ENCODE measurements at regions of chr22 and their contacts with region 1.

Region 1: GRCh38 chr22:50293441-50294318 is 13.8 kb downstream of the PLXNB2 start:
- DNase-seq: peak; percentile 96 to 98
- H3K4me3 ChIP-seq: peak overlapping the region; percentile 54
- H3K27ac ChIP-seq: peak overlapping the region; percentile 87
- H3K4me1 ChIP-seq: peaks cover 58% of the 10 kb centered on the region
- H3K27me3 ChIP-seq: no peaks in the 10 kb centered on the region
- CTCF ChIP-seq: peak; percentile 30; the same call in 1 of the 2 replicates

Region 2: GRCh38 chr22:50282361-50282760 is 11.3 kb before region 1 on chr22:
- CTCF ChIA-PET with region 1: no interaction called
- POLR2A ChIA-PET with region 1: interaction called, 9 read pairs
- intact Hi-C with region 1: loop called (anchors 1 kb)
- DNase-seq: peak; percentile 93 to 99
- H3K4me3 ChIP-seq: peak overlapping the region; percentile 45
- H3K27ac ChIP-seq: peak overlapping the region; percentile 73
- H3K4me1 ChIP-seq: peaks cover 38% of the 10 kb centered on the region
- H3K27me3 ChIP-seq: no peaks in the 10 kb centered on the region
- CTCF ChIP-seq: no peak

Region 3: GRCh38 chr22:50306753-50307749 is 13.4 kb after region 1 on chr22 and contains the start of gene PLXNB2:
- CTCF ChIA-PET with region 1: interaction called, 6 read pairs
- POLR2A ChIA-PET with region 1: interaction called, 27 read pairs
- intact Hi-C with region 1: loop called (anchors 1 kb)
- DNase-seq: peak; percentile 72 to 76
- H3K4me3 ChIP-seq: peak within 1 kb of the TSS; percentile 88
- H3K27ac ChIP-seq: peak within 1 kb of the TSS; percentile 92
- H3K4me1 ChIP-seq: peaks cover 42% of the 10 kb centered on the region
- H3K27me3 ChIP-seq: no peaks in the 10 kb centered on the region
- CTCF ChIP-seq: no peak
- total RNA-seq, gene PLXNB2: 250 and 260 TPM in 2 replicates

Region 4: GRCh38 chr22:50326959-50327710 is 33.5 kb after region 1 on chr22 and contains the start of gene DENND6B:
- CTCF ChIA-PET with region 1: interaction called, 4 read pairs
- POLR2A ChIA-PET with region 1: no interaction called
- intact Hi-C with region 1: loop called (anchors 1 kb)
- DNase-seq: peak; percentile 62 to 80
- H3K4me3 ChIP-seq: peak within 1 kb of the TSS; percentile 92
- H3K27ac ChIP-seq: peak within 1 kb of the TSS; percentile 46
- H3K4me1 ChIP-seq: peaks cover 33% of the 10 kb centered on the region
- H3K27me3 ChIP-seq: no peaks in the 10 kb centered on the region
- CTCF ChIP-seq: peak; percentile 61
- total RNA-seq, gene DENND6B: 12.1 and 14.3 TPM in 2 replicates

Region 5: GRCh38 chr22:50507991-50508884 is 214.6 kb after region 1 on chr22 and contains the start of gene NCAPH2:
- CTCF ChIA-PET with region 1: no interaction called
- POLR2A ChIA-PET with region 1: interaction called, 14 read pairs
- intact Hi-C with region 1: no loop called
- DNase-seq: peak; percentile 93 to 94
- H3K4me3 ChIP-seq: peak within 1 kb of the TSS; percentile 97
- H3K27ac ChIP-seq: peak within 1 kb of the TSS; percentile 48
- H3K4me1 ChIP-seq: peaks cover 19% of the 10 kb centered on the region
- H3K27me3 ChIP-seq: no peaks in the 10 kb centered on the region
- CTCF ChIP-seq: no peak
- total RNA-seq, gene NCAPH2: 58.8 and 62.9 TPM in 2 replicates

Measured in PC-9 (cell line).